GM12878 (cell line): ENCODE measurements at regions of chr7 and their contacts with region 1.

Region 1: GRCh38 chr7:24587848-24588247 is 14.6 kb downstream of the PALS2 start:
- DNase-seq: no peak
- ATAC-seq: peak; percentile 92
- H3K4me3 ChIP-seq: peak overlapping the region; percentile 18; the same call in 1 of the 2 replicates
- H3K27ac ChIP-seq: peak overlapping the region; percentile 30
- H3K4me1 ChIP-seq: peaks cover 24% of the 10 kb centered on the region
- H3K27me3 ChIP-seq: no peaks in the 10 kb centered on the region
- CTCF ChIP-seq: peak; percentile 67 to 79 (median 73)
- EP300 ChIP-seq: no peak
- POLR2A ChIP-seq: no peak
- RAD21 ChIP-seq: peak; percentile 91

Region 2: DNA sequence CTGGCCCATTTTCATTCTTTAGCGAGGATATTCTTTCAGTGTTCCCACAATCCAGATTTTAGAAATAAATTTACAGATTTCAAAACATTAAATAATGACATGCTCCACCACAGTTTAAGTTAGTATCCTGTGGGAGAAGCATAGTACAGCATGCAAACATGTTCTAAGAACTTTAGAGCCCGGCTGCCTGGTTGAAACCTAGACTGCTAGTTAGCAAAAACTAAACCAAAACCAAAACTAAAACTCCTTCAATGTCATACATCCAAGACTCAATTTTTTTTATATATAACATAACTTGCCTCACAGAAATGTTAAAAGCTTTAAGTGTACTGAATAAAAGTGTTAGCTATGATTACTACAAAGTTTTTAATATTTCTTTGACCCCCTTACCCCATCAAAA is 1073.1 kb before region 1 on chr7:
- CTCF ChIA-PET with region 1: no interaction called
- POLR2A ChIA-PET with region 1: no interaction called
- RAD21 ChIA-PET with region 1: no interaction called
- SMC1A ChIA-PET with region 1: no interaction called
- in situ Hi-C with region 1: no loop called
- intact Hi-C with region 1: no loop called
- DNase-seq: no peak
- ATAC-seq: peak; percentile 79
- H3K4me3 ChIP-seq: no peak overlapping the region
- H3K27ac ChIP-seq: no peak overlapping the region; the same call in 1 of the 2 replicates
- H3K4me1 ChIP-seq: no peaks in the 10 kb centered on the region; the same call in 1 of the 2 replicates
- H3K27me3 ChIP-seq: no peaks in the 10 kb centered on the region
- CTCF ChIP-seq: no peak
- EP300 ChIP-seq: no peak
- POLR2A ChIP-seq: no peak
- RAD21 ChIP-seq: no peak

Region 3: GRCh38 chr7:23938937-23939552 is 648.8 kb before region 1 on chr7:
- CTCF ChIA-PET with region 1: no interaction called
- POLR2A ChIA-PET with region 1: no interaction called
- RAD21 ChIA-PET with region 1: interaction called, 6 read pairs
- SMC1A ChIA-PET with region 1: no interaction called
- in situ Hi-C with region 1: no loop called
- intact Hi-C with region 1: loop called (anchors 5 kb)
- DNase-seq: no peak
- ATAC-seq: peak; percentile 94
- H3K4me3 ChIP-seq: no peak overlapping the region
- H3K27ac ChIP-seq: no peak overlapping the region
- H3K4me1 ChIP-seq: no peaks in the 10 kb centered on the region
- H3K27me3 ChIP-seq: no peaks in the 10 kb centered on the region
- CTCF ChIP-seq: peak; percentile 51 to 60 (median 58); a peak in 5 of 6 replicates
- EP300 ChIP-seq: no peak
- POLR2A ChIP-seq: no peak
- RAD21 ChIP-seq: peak; percentile 62

Region 4: GRCh38 chr7:24318326-24318725 is 269.5 kb before region 1 on chr7:
- CTCF ChIA-PET with region 1: no interaction called
- POLR2A ChIA-PET with region 1: no interaction called
- RAD21 ChIA-PET with region 1: no interaction called
- SMC1A ChIA-PET with region 1: interaction called, 4 read pairs
- in situ Hi-C with region 1: no loop called
- intact Hi-C with region 1: loop called (anchors 1 kb)
- DNase-seq: no peak
- ATAC-seq: peak; percentile 86
- H3K4me3 ChIP-seq: no peak overlapping the region
- H3K27ac ChIP-seq: no peak overlapping the region
- H3K4me1 ChIP-seq: no peaks in the 10 kb centered on the region
- H3K27me3 ChIP-seq: no peaks in the 10 kb centered on the region
- CTCF ChIP-seq: peak; percentile 56 to 69 (median 66)
- EP300 ChIP-seq: no peak
- POLR2A ChIP-seq: no peak
- RAD21 ChIP-seq: peak; percentile 87

Region 5: GRCh38 chr7:24401628-24402593 is 185.9 kb before region 1 on chr7:
- CTCF ChIA-PET with region 1: interaction called, 5 read pairs
- POLR2A ChIA-PET with region 1: no interaction called
- RAD21 ChIA-PET with region 1: no interaction called
- SMC1A ChIA-PET with region 1: interaction called, 5 read pairs
- in situ Hi-C with region 1: no loop called
- intact Hi-C with region 1: loop called (anchors 1 kb)
- DNase-seq: no peak
- ATAC-seq: peak; percentile 81
- H3K4me3 ChIP-seq: no peak overlapping the region
- H3K27ac ChIP-seq: no peak overlapping the region
- H3K4me1 ChIP-seq: peaks cover 9% of the 10 kb centered on the region
- H3K27me3 ChIP-seq: no peaks in the 10 kb centered on the region
- CTCF ChIP-seq: peak; percentile 38 to 52 (median 50); a peak in 5 of 6 replicates
- EP300 ChIP-seq: no peak
- POLR2A ChIP-seq: no peak
- RAD21 ChIP-seq: peak; percentile 72

Region 6: GRCh38 chr7:24722386-24723177 is 134.7 kb after region 1 on chr7:
- CTCF ChIA-PET with region 1: no interaction called
- POLR2A ChIA-PET with region 1: no interaction called
- RAD21 ChIA-PET with region 1: no interaction called
- SMC1A ChIA-PET with region 1: no interaction called
- in situ Hi-C with region 1: no loop called
- intact Hi-C with region 1: no loop called
- DNase-seq: no peak
- ATAC-seq: no peak
- H3K4me3 ChIP-seq: no peak overlapping the region
- H3K27ac ChIP-seq: no peak overlapping the region
- H3K4me1 ChIP-seq: peaks cover 59% of the 10 kb centered on the region
- H3K27me3 ChIP-seq: no peaks in the 10 kb centered on the region
- CTCF ChIP-seq: peak in 1 of 3 experiments; percentile 24; a peak in 2 of 6 replicates
- EP300 ChIP-seq: no peak
- POLR2A ChIP-seq: no peak
- RAD21 ChIP-seq: peak; percentile 33; the same call in 1 of the 2 replicates

Region 7: DNA sequence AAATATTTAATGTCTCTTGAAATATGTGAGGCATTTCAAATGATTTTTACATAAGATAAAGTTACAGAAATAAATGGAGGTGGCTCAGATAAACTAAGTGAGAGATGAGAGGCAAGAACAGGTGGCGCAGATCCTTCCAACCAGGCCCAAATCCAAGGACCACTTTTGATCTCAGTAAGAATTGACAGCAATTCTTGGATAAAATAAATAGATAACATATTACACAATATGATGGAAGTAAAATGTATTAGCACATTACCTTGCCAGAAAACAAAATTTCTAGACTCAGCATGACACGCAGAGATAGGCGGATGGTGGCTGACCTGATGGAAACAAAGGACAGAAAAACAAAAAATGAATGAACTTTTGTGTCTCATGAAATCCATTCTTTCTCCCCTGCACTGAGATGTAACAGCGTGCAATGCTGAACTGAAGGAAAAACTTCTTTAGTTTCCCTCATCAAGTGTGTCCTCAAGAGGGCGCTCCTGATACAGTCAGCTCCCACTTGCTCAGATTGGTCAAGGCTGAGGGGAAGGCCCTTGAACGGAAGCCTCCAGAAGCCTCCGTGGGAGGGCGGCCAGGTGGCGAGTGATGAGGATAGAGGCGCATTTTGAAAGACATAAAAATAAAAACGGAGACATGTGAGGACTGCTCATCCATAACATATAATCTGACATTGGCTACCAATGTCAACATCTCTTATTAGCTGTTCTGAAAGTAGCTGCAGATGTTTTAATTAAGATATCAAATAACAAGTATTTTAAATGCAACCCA is 232.3 kb after region 1 on chr7:
- CTCF ChIA-PET with region 1: no interaction called
- POLR2A ChIA-PET with region 1: no interaction called
- RAD21 ChIA-PET with region 1: no interaction called
- SMC1A ChIA-PET with region 1: no interaction called
- in situ Hi-C with region 1: no loop called
- intact Hi-C with region 1: no loop called
- DNase-seq: no peak
- ATAC-seq: peak; percentile 84
- H3K4me3 ChIP-seq: no peak overlapping the region
- H3K27ac ChIP-seq: peak overlapping the region; percentile 81
- H3K4me1 ChIP-seq: peaks cover 21% of the 10 kb centered on the region
- H3K27me3 ChIP-seq: no peaks in the 10 kb centered on the region
- CTCF ChIP-seq: peak; percentile 82 to 95 (median 87)
- EP300 ChIP-seq: peak in 1 of 2 experiments; percentile 33; a peak in 1 of 4 replicates
- POLR2A ChIP-seq: no peak
- RAD21 ChIP-seq: peak; percentile 99